Gastrocnemius medialis (tissue), 4 donors: ENCODE measurements at regions of chr2 and their contacts with region 1.

Region 1: DNA sequence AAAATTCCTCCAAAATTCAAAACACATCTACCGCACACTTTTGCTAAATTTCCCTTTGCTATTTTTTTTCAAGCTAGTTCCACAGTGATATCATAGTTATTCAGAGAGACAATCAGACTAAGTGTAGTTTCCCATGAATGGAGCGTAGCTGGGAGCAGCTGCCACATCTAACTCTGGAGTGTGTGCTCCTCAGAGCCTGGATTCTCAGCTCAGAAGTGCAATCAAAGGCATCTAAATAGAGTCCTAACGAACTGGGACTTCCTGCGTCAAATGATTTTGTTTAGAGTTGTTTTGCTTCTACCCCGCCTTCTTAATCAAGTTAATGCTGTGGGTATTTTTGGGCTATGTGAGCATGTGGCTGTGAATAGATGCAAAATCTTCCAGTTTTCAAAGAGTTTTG is 160.3 kb downstream of the TMEM18 start:
- DNase-seq: no peak
- ATAC-seq: no peak
- H3K4me3 ChIP-seq: no peak overlapping the region
- H3K27ac ChIP-seq: no peak overlapping the region
- H3K4me1 ChIP-seq: no peaks in the 10 kb centered on the region
- H3K27me3 ChIP-seq: no peaks in the 10 kb centered on the region
- CTCF ChIP-seq: no peak
- POLR2A ChIP-seq: no peak

Region 2: GRCh38 chr2:201648-202433 is 315.1 kb before region 1 on chr2:
- in situ Hi-C with region 1: no loop called
- intact Hi-C with region 1: no loop called
- DNase-seq: no peak
- ATAC-seq: no peak
- H3K4me3 ChIP-seq: no peak overlapping the region
- H3K27ac ChIP-seq: no peak overlapping the region
- H3K4me1 ChIP-seq: no peaks in the 10 kb centered on the region
- H3K27me3 ChIP-seq: peaks cover 5 to 15% (median 8%) of the 10 kb centered on the region in 3 donors
- CTCF ChIP-seq: no peak
- POLR2A ChIP-seq: no peak

Region 3: DNA sequence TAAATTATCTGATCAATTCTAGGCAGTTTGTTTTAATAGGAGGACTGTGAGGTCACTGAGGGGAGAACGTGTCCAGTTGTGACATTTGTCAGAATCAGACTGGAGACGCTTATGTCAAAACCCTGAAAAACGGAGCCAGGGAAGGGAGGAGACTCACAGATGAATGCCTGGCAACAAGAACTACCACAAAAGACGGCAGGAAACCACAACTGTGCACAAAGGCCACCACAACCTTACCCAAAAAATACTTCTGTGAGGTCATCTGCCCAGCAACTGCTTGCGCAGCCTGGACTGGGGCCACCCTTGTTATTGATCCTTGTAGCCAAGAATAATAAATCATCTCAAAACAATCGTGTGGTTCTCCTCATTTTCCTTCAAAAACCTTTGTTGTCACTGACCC is 56.1 kb before region 1 on chr2:
- in situ Hi-C with region 1: no loop called
- intact Hi-C with region 1: no loop called
- DNase-seq: no peak
- ATAC-seq: no peak
- H3K4me3 ChIP-seq: no peak overlapping the region
- H3K27ac ChIP-seq: no peak overlapping the region
- H3K4me1 ChIP-seq: no peaks in the 10 kb centered on the region
- H3K27me3 ChIP-seq: peaks cover 0 to 3% (median 0%) of the 10 kb centered on the region in 3 donors
- CTCF ChIP-seq: no peak
- POLR2A ChIP-seq: no peak

Region 4: GRCh38 chr2:494853-495252 is 22.1 kb before region 1 on chr2:
- in situ Hi-C with region 1: no loop called
- intact Hi-C with region 1: loop called (anchors 1 kb)
- DNase-seq: no peak
- ATAC-seq: no peak
- H3K4me3 ChIP-seq: no peak overlapping the region
- H3K27ac ChIP-seq: no peak overlapping the region
- H3K4me1 ChIP-seq: no peaks in the 10 kb centered on the region
- H3K27me3 ChIP-seq: no peaks in the 10 kb centered on the region
- CTCF ChIP-seq: no peak
- POLR2A ChIP-seq: no peak

Region 5: DNA sequence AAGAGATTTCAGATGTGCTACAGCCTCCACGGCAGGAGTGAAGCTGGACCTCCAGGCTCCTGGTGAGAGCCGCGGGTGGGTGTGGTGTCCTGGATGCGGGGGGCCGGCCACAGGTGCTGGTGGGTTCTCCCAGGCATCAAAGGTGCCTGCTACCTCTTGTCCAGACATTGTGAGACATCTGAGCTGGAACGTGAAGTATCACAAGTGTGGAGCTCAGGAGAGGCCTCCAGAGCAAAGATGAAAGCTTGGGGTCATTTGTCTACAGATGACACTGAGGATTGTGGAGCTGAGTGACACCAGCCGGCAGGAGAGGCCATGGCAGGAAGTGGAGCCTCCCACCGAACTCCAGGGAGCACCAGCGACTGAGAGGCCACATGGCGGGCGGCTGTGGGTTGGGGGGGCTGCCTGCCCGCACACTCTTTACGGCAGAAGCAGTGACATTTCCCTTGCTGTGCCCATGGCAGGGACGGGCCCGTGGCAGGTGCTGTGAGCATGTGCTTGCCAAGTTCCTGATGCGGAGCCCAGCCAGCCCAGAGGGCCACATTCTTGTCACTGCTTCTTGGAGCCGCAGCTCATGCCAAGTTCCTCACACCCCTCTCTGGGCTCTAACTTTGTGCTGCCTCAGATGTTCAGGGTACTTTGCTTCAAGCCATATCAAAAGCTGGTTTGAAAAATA is 29.2 kb after region 1 on chr2:
- in situ Hi-C with region 1: no loop called
- intact Hi-C with region 1: no loop called
- DNase-seq: no peak
- ATAC-seq: no peak
- H3K4me3 ChIP-seq: no peak overlapping the region
- H3K27ac ChIP-seq: no peak overlapping the region
- H3K4me1 ChIP-seq: no peaks in the 10 kb centered on the region
- H3K27me3 ChIP-seq: peaks cover 0 to 2% (median 0%) of the 10 kb centered on the region in 3 donors
- CTCF ChIP-seq: no peak
- POLR2A ChIP-seq: no peak